ENCODE measurements at regions of chr1 and their contacts with region 1.

Region 1: GRCh38 chr1:17451731-17452130 is 12.3 kb upstream of the RCC2 start:
- DNase-seq: no peak
- CTCF ChIP-seq: no peak

Region 2: DNA sequence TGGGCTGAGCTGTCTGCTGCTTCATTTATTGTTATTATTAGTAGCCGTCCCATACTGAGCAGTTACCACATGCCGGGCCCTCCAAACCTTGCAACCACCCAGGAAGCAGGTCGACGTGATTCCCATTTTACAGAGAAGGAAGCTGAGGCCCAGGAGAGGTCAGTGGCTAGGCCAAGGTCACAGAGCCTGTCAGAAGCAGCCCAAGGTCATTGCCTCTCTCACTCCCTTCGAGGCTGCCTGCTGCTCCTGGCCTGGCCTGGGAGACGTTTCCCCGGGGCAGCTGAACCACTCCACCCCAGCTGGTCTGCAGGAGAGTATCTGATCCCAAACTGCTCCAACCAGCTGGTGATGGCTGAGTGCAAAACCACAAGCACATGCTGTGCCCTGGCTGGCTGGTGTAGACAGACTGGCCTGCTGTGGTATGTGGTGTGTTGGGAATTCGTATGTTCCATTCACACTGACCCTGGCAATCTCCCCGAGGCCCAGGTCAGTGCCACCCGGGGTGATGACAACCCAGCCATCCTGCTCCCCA is 137.2 kb before region 1 on chr1:
- CTCF ChIA-PET with region 1: no interaction called
- POLR2A ChIA-PET with region 1: no interaction called
- DNase-seq: no peak
- CTCF ChIP-seq: no peak

Region 3: DNA sequence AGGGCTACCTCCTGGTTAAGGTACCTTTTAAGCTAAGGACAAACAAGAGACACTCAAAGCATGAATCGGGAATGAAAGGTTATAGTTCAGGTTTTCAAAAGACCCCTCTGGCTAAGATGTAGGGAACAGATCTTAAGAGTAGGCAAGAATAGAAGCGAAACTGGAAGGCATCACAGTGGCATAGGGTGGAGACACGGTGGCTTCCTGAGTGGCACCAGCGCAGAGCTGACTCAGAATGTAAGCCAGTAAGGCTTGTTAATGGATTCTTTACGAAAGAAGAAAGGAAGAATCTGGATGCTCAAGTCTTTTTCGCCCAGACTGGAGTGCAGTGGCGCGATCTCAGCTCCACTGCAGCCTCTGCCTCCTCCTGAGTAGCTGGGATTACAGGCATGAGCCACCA is 58.5 kb before region 1 on chr1:
- CTCF ChIA-PET with region 1: no interaction called
- POLR2A ChIA-PET with region 1: no interaction called
- DNase-seq: no peak
- CTCF ChIP-seq: no peak

Region 4: GRCh38 chr1:17439250-17440073 is 12.3 kb before region 1 on chr1 and contains the start of gene RCC2:
- CTCF ChIA-PET with region 1: interaction called, 10 read pairs
- POLR2A ChIA-PET with region 1: no interaction called
- DNase-seq: peak; percentile 90
- CTCF ChIP-seq: peak; percentile 35

Measured in GM10248 (cell line).